Spleen (tissue), 13 donors: ENCODE measurements at regions of chr9 and their contacts with region 1.

Region 1: GRCh38 chr9:126500684-126501382 is 112.9 kb upstream of the LMX1B start:
- DNase-seq: peak; percentile 93
- H3K4me3 ChIP-seq: peak overlapping the region in 1 of 8 donors; percentile 9
- H3K27ac ChIP-seq: no peak overlapping the region
- H3K4me1 ChIP-seq: peaks cover 13 to 43% (median 38%) of the 10 kb centered on the region in 6 donors
- H3K27me3 ChIP-seq: peaks cover 0 to 20% (median 8%) of the 10 kb centered on the region in 7 donors
- CTCF ChIP-seq: peak; percentile 94 to 99 (median 97)
- POLR2A ChIP-seq: no peak

Region 2: DNA sequence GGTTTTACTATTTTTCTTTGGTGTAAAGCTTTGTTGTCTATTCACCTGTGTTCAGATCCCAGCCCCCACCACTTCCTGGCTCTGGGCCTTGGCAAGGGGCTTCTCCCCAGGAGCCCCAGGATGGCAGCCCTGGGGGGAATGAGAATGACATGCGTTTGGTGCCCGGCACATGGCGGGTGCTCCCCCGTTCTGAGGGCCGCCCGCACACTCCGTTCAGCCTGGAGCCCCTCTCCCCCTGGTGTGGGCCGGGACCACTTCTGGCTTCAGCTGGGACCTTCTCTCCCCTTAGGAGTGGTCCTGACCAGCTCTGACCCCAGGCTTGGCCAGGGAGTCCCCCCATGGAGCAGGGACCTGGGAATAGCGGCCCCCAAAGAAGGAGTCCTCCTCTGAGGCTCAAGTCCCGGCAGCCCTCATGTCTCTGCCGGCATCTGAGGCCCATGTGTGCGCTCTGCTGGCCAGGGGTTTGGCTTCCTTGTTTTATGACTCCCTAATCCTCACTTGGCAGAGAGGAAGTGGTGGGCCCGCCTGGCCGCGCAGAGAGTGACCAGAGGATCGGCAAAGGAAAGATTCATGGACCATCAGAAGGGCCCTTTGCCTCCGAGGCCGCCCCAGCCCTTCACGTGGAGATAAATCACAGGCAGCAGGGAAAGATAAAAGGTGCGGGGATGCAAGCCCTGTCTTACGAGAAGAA is 55.9 kb after region 1 on chr9:
- intact Hi-C with region 1: loop called (anchors 1 kb)
- DNase-seq: peak; percentile 70
- H3K4me3 ChIP-seq: no peak overlapping the region
- H3K27ac ChIP-seq: no peak overlapping the region
- H3K4me1 ChIP-seq: peaks cover 0 to 4% (median 0%) of the 10 kb centered on the region in 6 donors
- H3K27me3 ChIP-seq: peaks cover 0 to 26% (median 11%) of the 10 kb centered on the region in 7 donors
- CTCF ChIP-seq: no peak
- POLR2A ChIP-seq: no peak